Pancreas (tissue), 10 donors: ENCODE measurements at regions of chr5 and their contacts with region 1.

Region 1: GRCh38 chr5:134101686-134102439 is 12.6 kb upstream of the TCF7 start:
- DNase-seq: peak; percentile 37 to 92 (median 67)
- ATAC-seq: peak; percentile 76 to 93 (median 88)
- H3K4me3 ChIP-seq: no peak overlapping the region
- H3K27ac ChIP-seq: no peak overlapping the region
- H3K4me1 ChIP-seq: no peaks in the 10 kb centered on the region
- H3K27me3 ChIP-seq: no peaks in the 10 kb centered on the region
- CTCF ChIP-seq: peak; percentile 82 to 89 (median 84)

Region 2: GRCh38 chr5:133818031-133818431 is 283.8 kb before region 1 on chr5:
- intact Hi-C with region 1: no loop called
- DNase-seq: peak in 4 of 6 donors; percentile 71 to 94 (median 88)
- ATAC-seq: peak; percentile 87 to 97 (median 96)
- H3K4me3 ChIP-seq: no peak overlapping the region
- H3K27ac ChIP-seq: peak overlapping the region in 2 of 4 donors; percentile 20 to 48
- H3K4me1 ChIP-seq: peaks cover 0 to 16% (median 6%) of the 10 kb centered on the region in 3 donors
- H3K27me3 ChIP-seq: no peaks in the 10 kb centered on the region
- CTCF ChIP-seq: no peak

Region 3: GRCh38 chr5:134140530-134141201 is 38.8 kb after region 1 on chr5:
- intact Hi-C with region 1: loop called in 1 of 3 experiments (anchors 5 kb)
- DNase-seq: peak; percentile 50 to 84 (median 73)
- ATAC-seq: peak; percentile 69 to 89 (median 84)
- H3K4me3 ChIP-seq: no peak overlapping the region
- H3K27ac ChIP-seq: no peak overlapping the region
- H3K4me1 ChIP-seq: no peaks in the 10 kb centered on the region
- H3K27me3 ChIP-seq: no peaks in the 10 kb centered on the region
- CTCF ChIP-seq: peak; percentile 55 to 74 (median 72)

Region 4: GRCh38 chr5:134328619-134329018 is 226.8 kb after region 1 on chr5:
- intact Hi-C with region 1: no loop called
- DNase-seq: no peak
- ATAC-seq: no peak
- H3K4me3 ChIP-seq: no peak overlapping the region
- H3K27ac ChIP-seq: no peak overlapping the region
- H3K4me1 ChIP-seq: no peaks in the 10 kb centered on the region
- H3K27me3 ChIP-seq: no peaks in the 10 kb centered on the region
- CTCF ChIP-seq: no peak